GM18951 (cell line): ENCODE measurements at regions of chr4 and their contacts with region 1.

Region 1: GRCh38 chr4:153127760-153128494 is 76.3 kb upstream of the TRIM2 start:
- POLR2A ChIP-seq: no peak

Region 2: GRCh38 chr4:153045111-153045982 is 82.6 kb before region 1 on chr4:
- in situ Hi-C with region 1: no loop called
- POLR2A ChIP-seq: no peak

Region 3: GRCh38 chr4:153643406-153644383 is 515.8 kb after region 1 on chr4:
- in situ Hi-C with region 1: loop called (anchors 25 kb)
- POLR2A ChIP-seq: no peak